ENCODE measurements at regions of chr7 and their contacts with region 1.

Region 1: GRCh38 chr7:34687529-34687928 is 29.5 kb downstream of the NPSR1 start:
- DNase-seq: no peak
- ATAC-seq: no peak
- H3K4me3 ChIP-seq: no peak overlapping the region
- H3K27ac ChIP-seq: no peak overlapping the region
- H3K4me1 ChIP-seq: no peaks in the 10 kb centered on the region
- H3K27me3 ChIP-seq: no peaks in the 10 kb centered on the region
- CTCF ChIP-seq: no peak

Region 2: GRCh38 chr7:33973221-33974015 is 714.1 kb before region 1 on chr7:
- CTCF ChIA-PET with region 1: no interaction called
- POLR2A ChIA-PET with region 1: no interaction called
- in situ Hi-C with region 1: no loop called
- intact Hi-C with region 1: no loop called
- DNase-seq: no peak
- ATAC-seq: no peak
- H3K4me3 ChIP-seq: no peak overlapping the region
- H3K27ac ChIP-seq: no peak overlapping the region
- H3K4me1 ChIP-seq: no peaks in the 10 kb centered on the region
- H3K27me3 ChIP-seq: no peaks in the 10 kb centered on the region
- CTCF ChIP-seq: no peak

Region 3: GRCh38 chr7:34675749-34676374 is 11.7 kb before region 1 on chr7:
- CTCF ChIA-PET with region 1: interaction called, 15 read pairs
- POLR2A ChIA-PET with region 1: no interaction called
- in situ Hi-C with region 1: no loop called
- intact Hi-C with region 1: no loop called
- DNase-seq: peak; percentile 13
- ATAC-seq: peak; percentile 85
- H3K4me3 ChIP-seq: no peak overlapping the region
- H3K27ac ChIP-seq: no peak overlapping the region
- H3K4me1 ChIP-seq: no peaks in the 10 kb centered on the region
- H3K27me3 ChIP-seq: no peaks in the 10 kb centered on the region
- CTCF ChIP-seq: peak; percentile 85